Stomach (tissue), 19 donors: ENCODE measurements at regions of chr14 and their contacts with region 1.

Region 1: GRCh38 chr14:54329082-54329695 is 67.6 kb upstream of the CDKN3 start:
- DNase-seq: peak; percentile 33 to 81
- H3K4me3 ChIP-seq: no peak overlapping the region
- H3K27ac ChIP-seq: no peak overlapping the region
- H3K4me1 ChIP-seq: peaks cover 10 to 26% (median 18%) of the 10 kb centered on the region in 4 donors
- H3K27me3 ChIP-seq: no peaks in the 10 kb centered on the region
- CTCF ChIP-seq: peak in 5 of 7 experiments; percentile 49 to 67 (median 63)
- EP300 ChIP-seq: no peak
- POLR2A ChIP-seq: no peak

Region 2: DNA sequence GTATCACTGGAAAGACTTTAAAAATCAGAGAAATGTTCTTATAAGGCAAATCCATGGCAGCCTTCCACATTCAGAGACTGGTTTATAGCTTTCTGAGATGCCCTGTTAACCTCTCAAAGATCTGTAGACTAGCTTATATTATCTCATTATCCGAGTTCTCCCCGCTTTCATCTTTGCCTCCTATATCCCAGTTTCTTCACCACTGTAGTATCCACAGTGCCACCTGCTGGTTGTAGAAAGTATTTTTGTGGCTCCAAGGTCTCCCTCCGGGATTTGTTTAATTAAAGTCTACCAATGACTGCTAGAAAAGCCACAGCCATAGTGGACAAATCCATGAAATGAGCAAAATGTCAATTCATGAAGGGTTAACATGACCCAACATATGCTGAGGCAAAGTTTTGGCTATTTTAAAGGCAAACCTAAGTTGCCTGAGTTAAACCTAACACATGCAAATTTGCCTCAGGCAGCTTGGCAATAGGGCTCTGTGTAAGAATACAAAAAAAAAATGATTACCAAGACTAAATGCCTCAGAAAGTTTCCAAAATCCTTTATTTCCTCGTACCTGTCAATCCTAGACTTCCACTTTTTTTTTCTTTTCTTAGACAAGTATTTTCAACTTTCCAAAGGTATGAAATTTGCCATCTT is 153.8 kb before region 1 on chr14:
- intact Hi-C with region 1: loop called (anchors 10 kb)
- DNase-seq: peak; percentile 74 to 89
- H3K4me3 ChIP-seq: no peak overlapping the region
- H3K27ac ChIP-seq: peak overlapping the region in 1 of 5 donors; percentile 35
- H3K4me1 ChIP-seq: peaks cover 0 to 44% (median 26%) of the 10 kb centered on the region in 4 donors
- H3K27me3 ChIP-seq: no peaks in the 10 kb centered on the region
- CTCF ChIP-seq: peak in 6 of 7 experiments; percentile 34 to 91 (median 84)
- EP300 ChIP-seq: no peak
- POLR2A ChIP-seq: no peak